Endothelial cell of umbilical vein (primary cell): ENCODE measurements at regions of chr5 and their contacts with region 1.

Region 1: DNA sequence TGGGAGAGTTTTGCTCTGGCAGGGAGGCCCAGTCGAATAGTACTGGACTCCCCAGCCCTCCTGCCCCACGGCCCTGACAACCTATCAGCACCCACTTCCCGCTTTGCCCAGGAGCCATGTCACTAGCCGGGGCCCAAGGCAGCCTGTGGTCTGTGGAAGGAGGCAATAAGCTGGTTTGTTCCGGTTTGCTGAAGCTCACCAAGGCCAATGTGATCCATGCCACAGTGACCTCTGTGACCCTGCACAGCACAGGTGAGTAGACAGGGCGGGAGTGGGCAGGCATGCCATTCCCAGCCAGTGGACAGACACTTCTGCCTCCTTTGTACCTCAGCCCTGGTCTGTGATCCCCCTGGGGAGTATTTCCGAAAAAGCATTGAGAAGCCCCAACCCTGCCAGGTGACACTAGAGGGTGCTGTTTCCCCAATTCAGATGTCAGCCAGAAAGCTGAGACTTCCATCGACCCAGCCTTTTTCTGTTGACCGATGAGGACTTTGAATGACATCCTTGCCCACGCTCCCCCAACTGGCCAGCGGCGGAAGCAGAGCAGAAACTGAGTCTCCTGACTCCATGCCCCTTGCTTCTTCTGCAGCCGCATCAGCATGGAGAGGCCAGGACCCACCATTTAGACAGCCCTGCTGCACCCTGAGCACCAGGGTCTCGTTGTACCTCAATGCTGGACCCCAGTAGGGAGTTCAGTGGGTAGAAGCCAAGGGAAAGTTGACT is 9.6 kb downstream of the PCYOX1L start:
- DNase-seq: peak; percentile 64
- H3K4me3 ChIP-seq: no peak overlapping the region
- H3K27ac ChIP-seq: no peak overlapping the region
- H3K4me1 ChIP-seq: no peaks in the 10 kb centered on the region
- H3K27me3 ChIP-seq: no peaks in the 10 kb centered on the region
- CTCF ChIP-seq: peak; percentile 76 to 83
- POLR2A ChIP-seq: no peak

Region 2: GRCh38 chr5:149128023-149128875 is 239.2 kb before region 1 on chr5:
- CTCF ChIA-PET with region 1: interaction called, 6 read pairs
- POLR2A ChIA-PET with region 1: no interaction called
- dilution Hi-C with region 1: no loop called
- intact Hi-C with region 1: loop called (anchors 2 kb)
- DNase-seq: peak; percentile 16
- H3K4me3 ChIP-seq: no peak overlapping the region
- H3K27ac ChIP-seq: no peak overlapping the region
- H3K4me1 ChIP-seq: peaks cover 12% of the 10 kb centered on the region
- H3K27me3 ChIP-seq: no peaks in the 10 kb centered on the region
- CTCF ChIP-seq: peak; percentile 75 to 80
- POLR2A ChIP-seq: no peak

Region 3: GRCh38 chr5:149298842-149299404 is 68.5 kb before region 1 on chr5:
- CTCF ChIA-PET with region 1: interaction called, 10 read pairs
- POLR2A ChIA-PET with region 1: no interaction called
- dilution Hi-C with region 1: no loop called
- intact Hi-C with region 1: no loop called
- DNase-seq: peak; percentile 97
- H3K4me3 ChIP-seq: no peak overlapping the region
- H3K27ac ChIP-seq: peak overlapping the region; percentile 80
- H3K4me1 ChIP-seq: peaks cover 28% of the 10 kb centered on the region
- H3K27me3 ChIP-seq: no peaks in the 10 kb centered on the region
- CTCF ChIP-seq: no peak
- POLR2A ChIP-seq: peak; percentile 75

Region 4: GRCh38 chr5:149317281-149318048 is 49.9 kb before region 1 on chr5:
- CTCF ChIA-PET with region 1: interaction called, 131 read pairs
- POLR2A ChIA-PET with region 1: no interaction called
- dilution Hi-C with region 1: no loop called
- intact Hi-C with region 1: loop called (anchors 1 kb)
- DNase-seq: peak; percentile 62
- H3K4me3 ChIP-seq: no peak overlapping the region
- H3K27ac ChIP-seq: no peak overlapping the region
- H3K4me1 ChIP-seq: peaks cover 22% of the 10 kb centered on the region
- H3K27me3 ChIP-seq: no peaks in the 10 kb centered on the region
- CTCF ChIP-seq: peak; percentile 51 to 64
- POLR2A ChIP-seq: no peak

Region 5: DNA sequence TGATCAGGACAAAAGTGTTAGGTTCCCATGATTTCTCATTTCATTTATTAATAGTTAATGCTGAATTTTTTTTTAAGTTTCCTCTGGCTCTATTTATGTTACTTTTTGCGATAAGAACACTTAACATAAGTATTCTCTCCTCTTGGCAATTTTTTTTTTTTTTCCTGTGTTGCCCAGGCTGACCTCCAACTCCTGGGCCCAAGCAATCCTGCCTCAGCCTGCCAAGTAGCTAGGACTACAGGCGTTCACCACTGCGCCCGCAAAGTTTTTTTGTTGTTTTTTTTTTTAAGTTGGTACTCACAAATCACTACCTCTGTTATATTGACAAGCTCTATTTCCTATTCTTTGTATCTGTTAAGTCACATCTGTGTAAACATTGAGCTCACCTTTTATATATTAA is 15.2 kb before region 1 on chr5:
- CTCF ChIA-PET with region 1: interaction called, 67 read pairs
- POLR2A ChIA-PET with region 1: no interaction called
- dilution Hi-C with region 1: no loop called
- intact Hi-C with region 1: no loop called
- DNase-seq: no peak
- H3K4me3 ChIP-seq: no peak overlapping the region
- H3K27ac ChIP-seq: no peak overlapping the region
- H3K4me1 ChIP-seq: peaks cover 26% of the 10 kb centered on the region
- H3K27me3 ChIP-seq: no peaks in the 10 kb centered on the region
- CTCF ChIP-seq: no peak
- POLR2A ChIP-seq: no peak

Region 6: DNA sequence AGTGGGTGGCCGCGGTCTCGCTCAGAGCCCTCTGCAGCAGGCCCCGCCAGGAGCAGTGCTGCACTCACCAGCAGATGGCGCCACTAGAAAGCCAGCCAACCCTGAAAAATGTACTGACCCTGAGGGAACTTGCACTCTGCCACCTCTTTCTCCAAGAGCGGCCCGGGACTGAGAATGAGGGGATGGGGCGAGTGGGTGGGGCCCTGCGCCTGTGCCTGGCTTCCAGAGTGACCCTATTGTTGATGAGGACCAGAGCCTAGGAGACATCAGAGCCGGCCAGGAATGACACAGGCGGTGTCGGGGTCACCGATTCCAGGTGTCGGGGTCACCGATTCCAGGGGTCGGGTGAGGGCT is 14.6 kb after region 1 on chr5:
- CTCF ChIA-PET with region 1: interaction called, 20 read pairs
- POLR2A ChIA-PET with region 1: no interaction called
- dilution Hi-C with region 1: no loop called
- intact Hi-C with region 1: no loop called
- DNase-seq: peak; percentile 60
- H3K4me3 ChIP-seq: no peak overlapping the region
- H3K27ac ChIP-seq: no peak overlapping the region
- H3K4me1 ChIP-seq: no peaks in the 10 kb centered on the region
- H3K27me3 ChIP-seq: no peaks in the 10 kb centered on the region
- CTCF ChIP-seq: peak; percentile 86 to 97
- POLR2A ChIP-seq: no peak

Region 7: GRCh38 chr5:149387081-149387631 is 19.7 kb after region 1 on chr5:
- CTCF ChIA-PET with region 1: interaction called, 20 read pairs
- POLR2A ChIA-PET with region 1: no interaction called
- dilution Hi-C with region 1: no loop called
- intact Hi-C with region 1: no loop called
- DNase-seq: no peak
- H3K4me3 ChIP-seq: no peak overlapping the region
- H3K27ac ChIP-seq: no peak overlapping the region
- H3K4me1 ChIP-seq: no peaks in the 10 kb centered on the region
- H3K27me3 ChIP-seq: no peaks in the 10 kb centered on the region
- CTCF ChIP-seq: no peak
- POLR2A ChIP-seq: no peak